Activated B cell treated with CpG ODN at 0.5 μM for 24 hours (primary cell): ENCODE measurements at regions of chr6 and their contacts with region 1.

Region 1: GRCh38 chr6:42043787-42044475 is 6.4 kb upstream of the TAF8 start:
- DNase-seq: peak; percentile 87
- ATAC-seq: peak; percentile 44
- H3K4me3 Mint-ChIP-seq: peak overlapping the region; percentile 56
- H3K27ac Mint-ChIP-seq: peak overlapping the region; percentile 99
- H3K4me1 Mint-ChIP-seq: peaks cover 86% of the 10 kb centered on the region
- H3K27me3 Mint-ChIP-seq: no peaks in the 10 kb centered on the region
- CTCF ChIP-seq: peak; percentile 69

Region 2: GRCh38 chr6:41545703-41546474 is 498.0 kb before region 1 on chr6 and contains the start of gene FOXP4:
- CTCF ChIA-PET with region 1: no interaction called
- POLR2A ChIA-PET with region 1: no interaction called
- intact Hi-C with region 1: no loop called
- DNase-seq: peak; percentile 76
- ATAC-seq: peak; percentile 77
- H3K4me3 Mint-ChIP-seq: peak within 1 kb of the TSS; percentile 97
- H3K27ac Mint-ChIP-seq: peak within 1 kb of the TSS; percentile 91
- H3K4me1 Mint-ChIP-seq: peaks cover 43% of the 10 kb centered on the region
- H3K27me3 Mint-ChIP-seq: no peaks in the 10 kb centered on the region
- CTCF ChIP-seq: no peak
- total RNA-seq, gene FOXP4: 37.8 and 40.7 TPM in 2 replicates

Region 3: GRCh38 chr6:41705996-41706835 is 337.7 kb before region 1 on chr6:
- CTCF ChIA-PET with region 1: no interaction called
- POLR2A ChIA-PET with region 1: interaction called, 4 read pairs
- intact Hi-C with region 1: loop called (anchors 10 kb)
- DNase-seq: peak; percentile 83
- ATAC-seq: peak; percentile 81
- H3K4me3 Mint-ChIP-seq: peak overlapping the region; percentile 89
- H3K27ac Mint-ChIP-seq: peak overlapping the region; percentile 97
- H3K4me1 Mint-ChIP-seq: peaks cover 99% of the 10 kb centered on the region
- H3K27me3 Mint-ChIP-seq: no peaks in the 10 kb centered on the region
- CTCF ChIP-seq: peak; percentile 54

Region 4: GRCh38 chr6:41787219-41787917 is 256.6 kb before region 1 on chr6 and contains the start of gene TOMM6:
- CTCF ChIA-PET with region 1: interaction called, 51 read pairs
- POLR2A ChIA-PET with region 1: interaction called, 91 read pairs
- intact Hi-C with region 1: loop called (anchors 1 kb)
- DNase-seq: peak; percentile 91
- ATAC-seq: peak; percentile 83
- H3K4me3 Mint-ChIP-seq: peak within 1 kb of the TSS; percentile 97
- H3K27ac Mint-ChIP-seq: peak within 1 kb of the TSS; percentile 97
- H3K4me1 Mint-ChIP-seq: peaks cover 28% of the 10 kb centered on the region
- H3K27me3 Mint-ChIP-seq: no peaks in the 10 kb centered on the region
- CTCF ChIP-seq: peak; percentile 66
- total RNA-seq, gene TOMM6: 219 and 252 TPM in 2 replicates

Region 5: DNA sequence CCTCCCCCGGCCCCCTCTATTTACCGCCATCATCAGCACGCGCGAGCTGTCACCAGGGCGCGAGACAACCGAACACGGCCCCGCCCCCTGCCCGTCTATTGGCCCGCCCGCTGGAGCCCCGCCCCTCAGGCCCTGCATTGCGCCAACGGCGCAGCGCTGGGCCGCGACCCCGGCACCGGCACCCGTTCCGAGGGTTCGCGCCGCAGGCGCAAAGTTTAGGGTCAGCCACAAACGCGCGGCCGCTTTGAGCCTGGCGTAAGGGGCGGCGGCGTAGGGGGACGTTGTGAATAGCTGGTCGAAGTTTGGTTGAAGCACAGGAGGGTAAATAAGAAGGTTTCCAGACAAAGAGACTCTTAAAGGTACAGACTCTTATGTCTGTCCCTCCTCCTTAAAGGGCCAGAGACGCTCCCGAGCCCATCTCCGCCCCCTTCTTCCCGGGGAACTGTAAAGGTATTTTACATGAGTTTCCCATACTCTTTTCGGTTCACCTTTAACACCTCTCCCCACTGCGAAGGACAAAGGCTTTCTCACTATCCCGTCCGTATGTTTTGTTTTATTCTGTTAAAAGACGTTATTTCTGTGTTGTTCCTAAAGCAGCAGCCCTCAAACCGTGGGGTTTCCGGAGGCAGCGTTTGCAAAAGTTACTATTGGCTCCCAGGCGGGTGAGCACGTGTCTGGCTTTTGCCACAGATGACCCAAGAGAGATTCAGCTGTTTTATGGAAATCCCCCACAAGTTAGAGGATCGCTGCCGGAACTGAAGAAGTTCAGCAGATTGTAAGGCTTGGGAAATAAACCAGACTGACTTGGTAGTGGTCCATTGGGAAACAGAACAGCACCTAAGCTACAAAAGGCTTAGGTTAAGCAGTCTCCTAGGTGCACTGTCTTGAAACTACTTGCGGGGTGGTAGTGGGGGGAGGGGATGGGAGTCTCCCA is 148.4 kb before region 1 on chr6 and contains the start of gene USP49:
- CTCF ChIA-PET with region 1: interaction called, 13 read pairs
- POLR2A ChIA-PET with region 1: interaction called, 60 read pairs
- intact Hi-C with region 1: loop called (anchors 1 kb)
- DNase-seq: peak; percentile 90
- ATAC-seq: peak; percentile 92
- H3K4me3 Mint-ChIP-seq: no peak within 1 kb of the TSS
- H3K27ac Mint-ChIP-seq: peak within 1 kb of the TSS; percentile 95
- H3K4me1 Mint-ChIP-seq: peaks cover 14% of the 10 kb centered on the region
- H3K27me3 Mint-ChIP-seq: no peaks in the 10 kb centered on the region
- CTCF ChIP-seq: no peak
- total RNA-seq, gene USP49: 7.7 and 8.0 TPM in 2 replicates

Region 6: DNA sequence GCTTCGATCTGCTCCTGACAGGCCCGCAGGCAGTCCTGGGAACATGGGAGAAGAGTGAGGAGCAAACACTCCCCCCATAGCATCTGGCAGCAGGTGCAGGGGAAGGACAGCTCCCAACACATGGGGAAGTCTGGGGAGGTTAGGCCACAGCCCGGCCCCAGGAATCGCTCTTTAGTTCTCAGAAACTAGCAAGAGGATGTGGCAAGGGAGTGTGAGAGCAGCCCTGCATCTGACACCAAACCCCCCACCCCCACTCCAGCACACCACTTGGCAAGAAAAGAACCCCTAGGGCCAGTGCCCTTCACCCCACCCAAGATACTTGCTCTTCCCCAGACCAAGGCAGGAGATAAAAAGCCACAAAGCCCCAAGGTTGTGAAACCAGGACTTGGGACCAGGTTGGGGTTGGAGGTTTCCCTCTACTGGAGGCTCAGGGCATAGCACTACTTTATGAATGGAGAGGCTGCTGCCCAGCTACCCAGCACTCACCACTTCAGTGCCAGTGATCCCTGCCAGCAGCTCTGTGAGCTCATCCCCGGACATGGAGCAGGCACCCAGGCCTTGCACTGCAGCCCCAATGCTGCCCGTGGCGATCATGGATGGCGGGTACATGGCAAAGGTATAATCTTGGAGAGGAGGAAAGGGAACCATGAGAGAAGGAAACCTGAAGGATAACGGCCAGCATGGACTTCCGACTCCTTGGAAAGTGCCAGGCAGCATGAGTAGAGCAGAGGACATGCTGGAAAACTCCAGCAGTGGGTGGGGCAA is 107.7 kb before region 1 on chr6:
- CTCF ChIA-PET with region 1: interaction called, 90 read pairs
- POLR2A ChIA-PET with region 1: interaction called, 195 read pairs
- intact Hi-C with region 1: loop called (anchors 1 kb)
- DNase-seq: peak; percentile 38
- ATAC-seq: peak; percentile 69
- H3K4me3 Mint-ChIP-seq: peak overlapping the region; percentile 53
- H3K27ac Mint-ChIP-seq: peak overlapping the region; percentile 65
- H3K4me1 Mint-ChIP-seq: peaks cover 78% of the 10 kb centered on the region
- H3K27me3 Mint-ChIP-seq: no peaks in the 10 kb centered on the region
- CTCF ChIP-seq: peak; percentile 63

Region 7: DNA sequence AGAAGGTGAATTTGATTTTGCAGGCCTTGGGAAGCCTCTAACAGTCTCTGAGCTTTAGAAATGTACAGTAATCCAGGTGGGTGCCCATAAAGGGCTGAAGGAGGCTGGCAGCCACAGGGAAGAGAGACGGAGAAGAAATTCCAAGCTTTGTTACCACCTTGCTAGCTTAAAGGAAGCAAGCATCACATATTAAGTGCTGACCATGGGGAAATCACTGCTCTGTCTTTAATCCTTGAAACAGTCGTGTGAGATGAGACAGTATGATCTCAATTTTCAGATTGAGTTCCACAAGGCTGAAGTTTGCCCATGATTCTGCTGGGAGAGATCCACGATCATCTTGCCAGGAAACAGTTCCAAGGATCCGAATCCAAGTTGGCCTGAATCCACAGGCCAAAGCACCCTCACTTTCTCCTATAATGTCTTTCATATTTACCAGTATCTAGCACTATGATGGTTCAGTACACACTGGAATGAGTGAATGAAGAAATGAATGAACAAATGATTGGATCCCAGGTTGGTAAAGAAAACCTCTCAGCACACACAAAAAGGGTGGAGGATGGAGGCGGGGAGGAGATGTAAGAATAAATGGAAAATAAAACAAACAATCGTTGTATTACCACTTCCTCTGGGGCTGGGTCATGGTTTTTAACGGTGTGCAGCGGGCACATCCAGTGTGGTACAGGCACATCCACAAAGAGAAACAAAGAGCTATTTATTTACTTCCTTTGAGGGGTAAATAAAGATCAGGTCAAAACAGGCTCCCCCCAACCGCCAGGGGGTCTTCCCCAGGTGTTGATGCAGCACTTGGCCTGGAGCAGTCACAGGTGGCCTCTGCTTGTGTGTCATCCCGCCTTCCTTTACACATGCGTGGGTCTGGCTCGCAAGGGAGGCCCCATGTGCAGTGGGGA is 21.8 kb before region 1 on chr6:
- CTCF ChIA-PET with region 1: interaction called, 14 read pairs
- POLR2A ChIA-PET with region 1: interaction called, 25 read pairs
- intact Hi-C with region 1: loop called (anchors 1 kb)
- DNase-seq: peak; percentile 58
- ATAC-seq: peak; percentile 38
- H3K4me3 Mint-ChIP-seq: peak overlapping the region; percentile 75
- H3K27ac Mint-ChIP-seq: peak overlapping the region; percentile 99
- H3K4me1 Mint-ChIP-seq: peaks cover 83% of the 10 kb centered on the region
- H3K27me3 Mint-ChIP-seq: no peaks in the 10 kb centered on the region
- CTCF ChIP-seq: no peak

Region 8: GRCh38 chr6:42505377-42505702 is 461.4 kb after region 1 on chr6:
- CTCF ChIA-PET with region 1: no interaction called
- POLR2A ChIA-PET with region 1: interaction called, 11 read pairs
- intact Hi-C with region 1: no loop called
- DNase-seq: no peak
- ATAC-seq: peak; percentile 41
- H3K4me3 Mint-ChIP-seq: no peak overlapping the region
- H3K27ac Mint-ChIP-seq: peak overlapping the region; percentile 35
- H3K4me1 Mint-ChIP-seq: peaks cover 29% of the 10 kb centered on the region
- H3K27me3 Mint-ChIP-seq: no peaks in the 10 kb centered on the region
- CTCF ChIP-seq: no peak